ENCODE measurements at regions of chr16 and their contacts with region 1.

Region 1: DNA sequence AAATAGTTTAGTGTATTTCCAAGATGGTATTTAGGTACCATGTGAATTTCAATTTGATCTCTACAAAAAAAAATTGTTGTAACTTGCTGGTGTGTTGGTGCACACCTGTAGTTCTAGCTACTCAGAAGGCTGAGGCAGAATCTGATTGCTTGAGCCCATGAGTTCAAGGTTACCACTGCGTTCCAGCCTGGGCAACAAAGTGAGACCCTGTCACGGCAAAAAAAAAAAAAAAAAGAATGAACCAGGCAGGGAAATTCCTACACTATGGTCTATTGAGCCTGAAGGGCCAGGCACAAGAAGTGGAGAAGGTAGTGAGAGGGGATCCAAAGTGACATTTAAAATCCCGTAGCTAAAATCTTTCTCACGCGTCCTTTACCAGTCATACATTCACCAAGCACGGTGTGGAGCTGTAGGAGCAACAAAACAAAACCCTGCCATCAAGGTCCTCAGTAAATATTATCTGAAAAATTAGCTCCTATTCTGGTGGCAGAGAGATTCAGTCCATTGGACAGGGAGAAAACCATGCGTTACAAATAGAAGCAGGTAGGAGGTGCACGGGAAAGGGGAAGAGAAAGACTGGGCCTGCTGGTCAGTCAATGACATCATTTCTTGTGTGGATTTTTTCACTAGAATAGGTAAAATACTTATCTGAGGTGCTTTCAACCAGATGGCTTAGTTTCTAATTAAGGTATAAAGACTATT is 27.3 kb downstream of the TXNDC11 start:
- DNase-seq: no peak
- ATAC-seq: no peak

Region 2: DNA sequence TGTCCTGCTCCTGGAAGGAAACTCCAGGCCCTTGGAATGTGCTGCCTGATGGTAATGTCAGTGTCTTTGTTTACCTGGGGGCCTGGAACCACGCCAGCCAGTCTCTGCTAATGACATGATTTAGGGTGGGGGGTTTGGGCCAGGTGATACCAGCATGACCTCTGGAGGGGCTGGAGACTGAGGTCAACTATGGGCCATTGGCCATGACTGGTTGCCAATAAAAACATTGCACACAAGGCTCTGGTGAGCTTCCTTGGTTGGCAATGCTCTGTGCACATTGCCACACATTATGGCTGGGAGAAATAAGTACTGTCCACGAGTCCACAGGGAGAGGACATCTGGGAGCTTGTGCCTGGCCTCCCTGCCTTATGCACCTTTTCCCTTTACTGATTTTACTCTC is 181.1 kb before region 1 on chr16:
- intact Hi-C with region 1: loop called in 1 of 2 experiments (anchors 5 kb)
- DNase-seq: no peak
- ATAC-seq: peak; percentile 47